ENCODE measurements at regions of chr4 and their contacts with region 1.

Region 1: GRCh38 chr4:152735396-152735859 is 44.1 kb downstream of the TIGD4 start:
- DNase-seq: no peak
- ATAC-seq: peak in 1 of 8 donors; percentile 43
- H3K4me3 ChIP-seq: no peak overlapping the region
- H3K27ac ChIP-seq: no peak overlapping the region
- H3K4me1 ChIP-seq: no peaks in the 10 kb centered on the region
- H3K27me3 ChIP-seq: no peaks in the 10 kb centered on the region
- CTCF ChIP-seq: peak in 8 of 9 donors; percentile 45 to 79 (median 68)

Region 2: DNA sequence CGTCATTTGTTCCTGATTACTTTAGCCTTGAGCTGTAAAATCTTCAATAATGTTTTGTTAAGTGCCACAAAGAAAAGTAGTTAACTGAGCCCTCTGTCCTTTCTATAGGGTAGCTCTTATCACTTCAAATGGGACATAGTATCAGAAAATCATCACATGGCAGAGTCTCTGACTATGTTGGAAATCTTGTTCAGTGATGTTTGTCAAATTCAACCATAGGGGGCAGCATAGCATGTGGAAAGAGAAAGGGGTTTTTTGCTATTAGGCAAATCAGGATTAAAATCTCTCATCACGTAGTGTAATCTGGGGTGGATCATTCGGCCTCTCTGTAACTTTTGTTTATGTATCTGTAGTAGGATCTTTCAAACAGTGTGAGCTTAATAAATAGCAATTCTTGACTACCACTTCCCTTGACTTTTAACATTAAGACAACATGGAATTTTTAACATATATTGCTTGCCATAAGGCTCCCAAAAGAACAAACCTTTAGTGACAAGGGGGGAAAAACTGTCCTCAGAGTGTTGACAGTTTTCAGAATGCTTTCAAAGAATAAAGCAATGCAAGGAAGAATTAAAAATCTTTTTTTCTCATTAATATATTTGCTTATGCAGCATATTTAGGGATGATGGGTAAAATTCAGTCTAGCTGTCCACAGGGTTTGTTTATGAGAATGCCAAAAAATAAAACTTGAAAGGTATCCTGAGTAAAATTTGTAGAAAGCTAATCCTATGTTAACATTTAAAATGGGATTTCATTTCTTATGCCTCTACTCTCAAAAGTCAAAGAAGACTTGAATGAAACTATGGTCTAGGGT is 326.7 kb before region 1 on chr4:
- intact Hi-C with region 1: loop called in 1 of 10 experiments (anchors 5 kb)
- DNase-seq: no peak
- ATAC-seq: no peak
- H3K4me3 ChIP-seq: no peak overlapping the region
- H3K27ac ChIP-seq: no peak overlapping the region
- H3K4me1 ChIP-seq: no peaks in the 10 kb centered on the region
- H3K27me3 ChIP-seq: no peaks in the 10 kb centered on the region
- CTCF ChIP-seq: peak; percentile 24 to 62 (median 59)

Region 3: GRCh38 chr4:152500800-152501434 is 234.5 kb before region 1 on chr4:
- intact Hi-C with region 1: loop called in 9 of 10 experiments (anchors 1 to 5 kb)
- DNase-seq: peak in 1 of 2 donors; percentile 82
- ATAC-seq: peak in 7 of 8 donors; percentile 55 to 89 (median 73)
- H3K4me3 ChIP-seq: no peak overlapping the region
- H3K27ac ChIP-seq: no peak overlapping the region
- H3K4me1 ChIP-seq: peaks cover 0 to 15% (median 0%) of the 10 kb centered on the region in 9 donors
- H3K27me3 ChIP-seq: no peaks in the 10 kb centered on the region
- CTCF ChIP-seq: peak; percentile 63 to 89 (median 84)

Region 4: DNA sequence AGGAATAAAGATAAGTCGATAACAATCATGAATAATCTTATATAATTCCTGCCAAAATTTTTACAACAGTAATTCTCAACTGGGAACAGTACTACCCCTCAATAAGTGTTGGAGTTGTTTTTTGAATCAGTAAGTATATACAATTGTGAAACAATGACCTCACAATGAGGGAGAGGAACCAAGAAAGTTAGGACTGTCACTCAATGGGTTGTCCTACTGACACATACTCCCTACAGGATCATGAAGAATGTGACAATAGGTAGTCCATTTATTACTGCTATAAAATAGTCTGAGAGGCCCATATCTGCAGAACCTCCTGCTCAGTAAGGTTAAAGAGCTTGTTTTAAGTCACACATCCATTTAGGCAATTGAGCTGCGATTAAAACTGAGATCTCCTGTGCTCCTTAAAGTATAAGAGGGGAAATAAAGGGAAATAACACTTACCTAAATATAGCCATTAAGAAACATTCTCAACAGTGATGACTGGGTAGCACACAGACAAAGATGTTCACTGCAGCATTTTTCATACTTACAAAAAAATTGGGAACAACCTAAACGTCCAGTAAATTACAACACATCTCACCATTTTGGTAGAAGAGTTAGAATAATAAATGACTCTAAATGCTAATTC is 225.7 kb before region 1 on chr4:
- intact Hi-C with region 1: loop called in 5 of 10 experiments (anchors 5 kb)
- DNase-seq: no peak
- ATAC-seq: no peak
- H3K4me3 ChIP-seq: no peak overlapping the region
- H3K27ac ChIP-seq: no peak overlapping the region
- H3K4me1 ChIP-seq: peaks cover 0 to 27% (median 5%) of the 10 kb centered on the region in 9 donors
- H3K27me3 ChIP-seq: no peaks in the 10 kb centered on the region
- CTCF ChIP-seq: no peak

Region 5: GRCh38 chr4:152640058-152640833 is 95.2 kb before region 1 on chr4:
- intact Hi-C with region 1: loop called in 6 of 10 experiments (anchors 5 to 10 kb)
- DNase-seq: no peak
- ATAC-seq: peak in 4 of 8 donors; percentile 45 to 59 (median 56)
- H3K4me3 ChIP-seq: no peak overlapping the region
- H3K27ac ChIP-seq: peak overlapping the region in 1 of 10 donors; percentile 28
- H3K4me1 ChIP-seq: peaks cover 0 to 50% (median 6%) of the 10 kb centered on the region in 9 donors
- H3K27me3 ChIP-seq: no peaks in the 10 kb centered on the region
- CTCF ChIP-seq: peak; percentile 43 to 80 (median 67)

Region 6: DNA sequence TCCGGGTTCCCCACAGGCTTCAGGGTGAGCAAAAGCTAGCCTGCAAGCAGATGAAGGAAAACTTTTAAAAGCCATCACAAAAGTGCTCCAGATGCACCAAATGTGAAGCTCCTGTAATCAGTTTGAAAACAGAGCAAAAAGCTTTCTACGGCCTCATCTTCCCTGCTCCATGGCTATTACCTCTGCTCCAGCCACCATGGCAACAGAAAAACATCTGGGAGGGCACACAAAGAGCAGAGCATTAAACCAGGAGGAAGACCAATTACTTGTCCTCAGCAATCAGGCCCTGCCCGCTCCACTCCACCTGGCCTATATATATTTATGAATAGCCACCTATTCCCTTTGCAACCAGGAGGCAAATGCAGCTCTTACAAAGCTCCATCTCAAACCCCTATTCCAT is 89.2 kb before region 1 on chr4:
- intact Hi-C with region 1: loop called in 6 of 10 experiments (anchors 5 to 10 kb)
- DNase-seq: no peak
- ATAC-seq: no peak
- H3K4me3 ChIP-seq: no peak overlapping the region
- H3K27ac ChIP-seq: no peak overlapping the region
- H3K4me1 ChIP-seq: peaks cover 0 to 31% (median 5%) of the 10 kb centered on the region in 9 donors
- H3K27me3 ChIP-seq: no peaks in the 10 kb centered on the region
- CTCF ChIP-seq: no peak

Region 7: DNA sequence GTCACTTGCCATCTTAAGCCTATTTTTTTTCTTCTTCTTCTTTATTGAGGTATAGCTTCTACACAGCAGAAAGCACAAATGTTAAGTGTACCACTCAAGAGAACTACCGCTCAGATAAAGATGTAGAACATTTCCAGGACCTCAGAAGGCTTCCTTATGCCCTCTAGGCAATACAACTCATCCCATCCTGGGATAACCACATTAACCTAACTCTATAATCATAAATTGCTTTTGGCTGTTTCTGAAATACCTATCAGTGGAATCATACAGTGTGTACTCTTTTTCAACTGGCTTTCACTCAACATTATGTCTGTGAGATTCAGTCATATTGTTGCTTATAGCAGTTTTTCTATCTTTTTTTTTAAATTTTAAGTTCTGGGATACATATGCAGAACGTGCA is 96.0 kb after region 1 on chr4:
- intact Hi-C with region 1: no loop called
- DNase-seq: no peak
- ATAC-seq: no peak
- H3K4me3 ChIP-seq: no peak overlapping the region
- H3K27ac ChIP-seq: no peak overlapping the region
- H3K4me1 ChIP-seq: peaks cover 0 to 6% (median 0%) of the 10 kb centered on the region in 9 donors
- H3K27me3 ChIP-seq: no peaks in the 10 kb centered on the region
- CTCF ChIP-seq: no peak

Region 8: DNA sequence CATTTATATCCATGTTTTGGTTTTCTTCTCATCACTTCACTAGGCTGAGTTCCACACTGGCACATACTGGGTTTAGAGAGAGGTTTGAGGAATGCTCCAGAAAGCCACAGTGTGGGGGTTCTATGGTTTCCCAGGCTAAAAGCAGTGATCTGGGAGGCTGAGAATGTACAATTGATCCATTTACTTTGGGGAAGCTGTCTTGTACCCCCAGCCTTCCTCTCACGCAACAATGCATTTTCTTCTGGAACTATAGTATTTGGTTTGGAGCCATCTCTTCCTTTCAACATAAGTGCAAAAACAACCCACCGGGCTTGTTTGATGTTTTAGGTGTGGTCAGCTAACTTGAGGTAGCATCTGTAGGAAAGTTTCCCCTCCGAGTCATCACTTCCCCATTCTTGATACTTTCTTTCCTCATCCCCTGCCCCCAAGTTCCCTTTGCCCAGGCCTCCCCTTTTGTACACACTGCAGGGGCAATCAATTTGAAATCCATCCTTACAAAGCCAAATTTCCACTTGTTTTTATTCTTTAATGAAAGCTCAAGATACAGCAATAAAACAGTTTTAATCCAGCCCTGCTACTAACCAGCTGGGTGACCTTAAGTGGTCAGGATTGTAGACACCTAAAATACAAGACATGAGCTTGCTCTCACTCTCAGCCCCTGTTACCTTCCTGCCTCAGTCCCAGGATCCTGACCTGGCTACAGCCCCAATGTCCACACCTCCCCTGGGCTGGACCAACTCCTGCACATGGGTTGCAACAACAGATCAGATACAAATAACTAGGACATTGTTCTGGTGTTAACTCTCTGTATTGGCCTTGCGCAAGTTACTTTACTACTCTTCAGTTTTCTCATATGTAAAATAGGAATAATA is 309.9 kb after region 1 on chr4:
- intact Hi-C with region 1: no loop called
- DNase-seq: no peak
- ATAC-seq: no peak
- H3K4me3 ChIP-seq: no peak overlapping the region
- H3K27ac ChIP-seq: no peak overlapping the region
- H3K4me1 ChIP-seq: no peaks in the 10 kb centered on the region
- H3K27me3 ChIP-seq: peaks cover 0 to 5% (median 0%) of the 10 kb centered on the region in 7 donors
- CTCF ChIP-seq: no peak